Posterior vena cava (tissue), 2 donors: ENCODE measurements at regions of chr22 and their contacts with region 1.

Region 1: GRCh38 chr22:42270512-42271417 is at the start of gene TCF20:
- DNase-seq: peak; percentile 93
- total RNA-seq, gene TCF20: 26.9 to 27.2 TPM

Region 2: GRCh38 chr22:41557401-41558240 is 713.1 kb before region 1 on chr22:
- intact Hi-C with region 1: no loop called
- DNase-seq: peak; percentile 90

Region 3: DNA sequence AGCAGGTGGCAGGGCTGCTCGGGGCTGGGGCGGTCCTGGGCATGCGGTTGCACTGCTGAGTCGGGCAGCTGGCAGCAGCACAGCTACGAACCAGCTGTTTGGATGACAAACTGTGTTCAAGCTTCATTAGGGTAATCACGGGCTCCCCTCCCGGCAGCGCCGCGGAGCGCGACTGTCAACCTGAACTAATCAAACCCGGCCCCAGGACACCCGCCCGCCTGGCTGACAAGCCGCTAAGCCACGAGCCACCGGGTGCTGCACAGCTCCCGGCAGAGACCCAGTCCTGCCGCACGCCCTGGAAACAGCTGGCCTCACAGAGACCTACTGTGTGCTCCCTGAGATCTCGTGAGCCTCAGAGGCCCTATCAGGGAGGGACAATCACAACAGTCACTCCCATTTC is 60.2 kb after region 1 on chr22:
- intact Hi-C with region 1: loop called in 1 of 2 experiments (anchors 10 kb)
- DNase-seq: no peak